Activated CD8-positive, alpha-beta memory T cell treated with anti-CD3 and anti-CD28 coated beads, Interleukin-2, amount 10 ng/mL, durations not matched to agents 7 days and 5 days (primary cell): ENCODE measurements at regions of chr1 and their contacts with region 1.

Region 1: GRCh38 chr1:209576798-209577197 is 6.7 kb upstream of the CAMK1G start:
- DNase-seq: peak; percentile 77
- ATAC-seq: peak; percentile 95
- H3K4me3 Mint-ChIP-seq: no peak overlapping the region
- H3K27ac Mint-ChIP-seq: no peak overlapping the region
- H3K4me1 Mint-ChIP-seq: no peaks in the 10 kb centered on the region
- H3K27me3 Mint-ChIP-seq: peaks cover 31% of the 10 kb centered on the region

Region 2: DNA sequence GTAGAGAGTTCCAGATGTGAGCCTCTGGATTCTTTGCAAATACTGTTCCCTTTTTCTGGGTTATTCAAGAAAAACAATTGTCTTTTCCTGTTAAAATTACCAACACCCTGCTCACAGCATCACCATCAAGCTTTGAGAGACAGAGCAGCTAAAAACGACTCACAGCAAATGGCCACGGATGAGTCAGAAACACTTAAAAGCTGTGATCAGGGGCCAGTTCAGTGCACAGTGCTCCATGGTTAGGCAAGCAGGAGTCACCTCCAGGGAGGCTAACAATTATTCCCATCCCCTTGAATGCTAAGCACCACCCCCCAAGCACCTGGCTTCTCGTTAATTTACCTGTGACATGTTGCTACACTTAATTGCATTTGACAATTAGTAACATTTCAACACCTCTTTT is 121.7 kb before region 1 on chr1:
- CTCF ChIA-PET with region 1: no interaction called
- DNase-seq: no peak
- ATAC-seq: no peak
- H3K4me3 Mint-ChIP-seq: no peak overlapping the region
- H3K27ac Mint-ChIP-seq: no peak overlapping the region
- H3K4me1 Mint-ChIP-seq: no peaks in the 10 kb centered on the region
- H3K27me3 Mint-ChIP-seq: peaks cover 15% of the 10 kb centered on the region

Region 3: GRCh38 chr1:209565759-209566678 is 10.8 kb before region 1 on chr1:
- CTCF ChIA-PET with region 1: interaction called, 29 read pairs
- DNase-seq: peak; percentile 85
- ATAC-seq: peak; percentile 89
- H3K4me3 Mint-ChIP-seq: no peak overlapping the region
- H3K27ac Mint-ChIP-seq: no peak overlapping the region
- H3K4me1 Mint-ChIP-seq: peaks cover 9% of the 10 kb centered on the region
- H3K27me3 Mint-ChIP-seq: peaks cover 38% of the 10 kb centered on the region

Region 4: GRCh38 chr1:209627732-209628196 is 51.0 kb after region 1 on chr1:
- CTCF ChIA-PET with region 1: interaction called, 19 read pairs
- DNase-seq: peak; percentile 84
- ATAC-seq: peak; percentile 88
- H3K4me3 Mint-ChIP-seq: no peak overlapping the region
- H3K27ac Mint-ChIP-seq: no peak overlapping the region
- H3K4me1 Mint-ChIP-seq: peaks cover 2% of the 10 kb centered on the region
- H3K27me3 Mint-ChIP-seq: no peaks in the 10 kb centered on the region